ENCODE measurements at regions of chr12 and their contacts with region 1.

Region 1: DNA sequence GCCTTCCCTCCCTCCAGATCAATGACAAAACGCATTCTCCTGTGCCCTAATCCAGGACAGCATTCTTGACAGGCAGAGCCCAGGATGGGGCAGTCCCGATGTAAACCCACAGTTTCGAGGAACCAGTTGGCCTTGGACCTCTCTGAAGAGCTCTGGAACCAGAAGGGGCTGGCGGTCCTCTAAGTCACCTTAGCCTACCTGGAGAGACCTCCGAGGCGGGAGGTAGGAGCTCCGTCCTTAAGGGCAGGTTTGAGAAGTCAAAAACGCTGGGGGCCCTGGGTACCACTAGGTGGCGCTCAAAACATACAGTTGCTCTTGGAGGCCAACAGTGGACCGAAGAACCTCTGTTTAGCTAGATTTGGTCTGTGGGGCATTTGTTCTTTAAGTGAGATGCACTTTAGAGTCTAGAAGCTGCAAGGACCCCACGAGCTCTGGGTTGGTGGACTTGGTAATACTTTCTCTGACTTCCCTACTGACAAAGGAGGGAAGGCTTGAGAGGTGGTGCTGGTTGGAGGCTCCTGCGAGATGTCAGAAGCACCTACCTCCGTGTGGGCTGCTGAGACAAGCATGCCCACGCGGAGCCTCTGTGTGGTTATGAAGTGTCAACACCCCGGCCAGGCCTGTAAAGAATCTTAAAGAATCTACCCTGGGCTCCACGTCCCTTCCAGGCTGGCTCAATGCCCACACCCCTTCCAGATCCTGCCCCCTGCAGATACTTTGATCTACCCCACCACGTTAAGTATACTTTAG is 74.8 kb upstream of the CHST11 start:
- DNase-seq: peak; percentile 62 to 86 (median 74)
- ATAC-seq: peak; percentile 94
- H3K4me3 ChIP-seq: no peak overlapping the region
- H3K4me3 Mint-ChIP-seq: no peak overlapping the region
- H3K27ac ChIP-seq: no peak overlapping the region
- H3K27ac Mint-ChIP-seq: peak overlapping the region in 1 of 9 donors; percentile 17
- H3K4me1 ChIP-seq: peaks cover 0 to 6% of the 10 kb centered on the region in 2 donors
- H3K4me1 Mint-ChIP-seq: peaks cover 0 to 18% (median 6%) of the 10 kb centered on the region in 7 donors
- H3K27me3 ChIP-seq: no peaks in the 10 kb centered on the region
- H3K27me3 Mint-ChIP-seq: peaks cover 0 to 15% (median 10%) of the 10 kb centered on the region in 5 donors

Region 2: GRCh38 chr12:104352106-104352713 is 29.7 kb before region 1 on chr12:
- CTCF ChIA-PET with region 1: no interaction called
- POLR2A ChIA-PET with region 1: no interaction called
- intact Hi-C with region 1: no loop called
- DNase-seq: no peak
- ATAC-seq: no peak
- H3K4me3 ChIP-seq: no peak overlapping the region
- H3K4me3 Mint-ChIP-seq: no peak overlapping the region
- H3K27ac ChIP-seq: no peak overlapping the region
- H3K27ac Mint-ChIP-seq: no peak overlapping the region
- H3K4me1 ChIP-seq: no peaks in the 10 kb centered on the region
- H3K4me1 Mint-ChIP-seq: peaks cover 0 to 8% (median 0%) of the 10 kb centered on the region in 7 donors
- H3K27me3 ChIP-seq: no peaks in the 10 kb centered on the region
- H3K27me3 Mint-ChIP-seq: no peaks in the 10 kb centered on the region

Region 3: GRCh38 chr12:104519190-104519989 is 137.5 kb after region 1 on chr12:
- CTCF ChIA-PET with region 1: interaction called, 13 read pairs
- POLR2A ChIA-PET with region 1: no interaction called
- intact Hi-C with region 1: loop called in 1 of 2 experiments (anchors 2 kb)
- DNase-seq: no peak
- ATAC-seq: peak; percentile 86
- H3K4me3 ChIP-seq: no peak overlapping the region
- H3K4me3 Mint-ChIP-seq: peak overlapping the region in 2 of 10 donors; percentile 42 to 50
- H3K27ac ChIP-seq: no peak overlapping the region
- H3K27ac Mint-ChIP-seq: peak overlapping the region in 5 of 9 donors; percentile 22 to 62 (median 37)
- H3K4me1 ChIP-seq: peaks cover 25 to 41% of the 10 kb centered on the region in 2 donors
- H3K4me1 Mint-ChIP-seq: peaks cover 63 to 96% (median 86%) of the 10 kb centered on the region in 7 donors
- H3K27me3 ChIP-seq: no peaks in the 10 kb centered on the region
- H3K27me3 Mint-ChIP-seq: no peaks in the 10 kb centered on the region

Region 4: GRCh38 chr12:104680066-104680465 is 298.2 kb after region 1 on chr12:
- CTCF ChIA-PET with region 1: interaction called, 3 read pairs
- POLR2A ChIA-PET with region 1: no interaction called
- intact Hi-C with region 1: loop called (anchors 5 kb)
- DNase-seq: peak in 7 of 9 donors; percentile 15 to 51 (median 30)
- ATAC-seq: peak; percentile 44
- H3K4me3 ChIP-seq: no peak overlapping the region
- H3K4me3 Mint-ChIP-seq: peak overlapping the region in 3 of 10 donors; percentile 16 to 36 (median 26)
- H3K27ac ChIP-seq: no peak overlapping the region
- H3K27ac Mint-ChIP-seq: peak overlapping the region in 3 of 9 donors; percentile 15 to 80 (median 26)
- H3K4me1 ChIP-seq: peaks cover 25 to 46% of the 10 kb centered on the region in 2 donors
- H3K4me1 Mint-ChIP-seq: peaks cover 36 to 80% (median 46%) of the 10 kb centered on the region in 7 donors
- H3K27me3 ChIP-seq: no peaks in the 10 kb centered on the region
- H3K27me3 Mint-ChIP-seq: no peaks in the 10 kb centered on the region

Region 5: DNA sequence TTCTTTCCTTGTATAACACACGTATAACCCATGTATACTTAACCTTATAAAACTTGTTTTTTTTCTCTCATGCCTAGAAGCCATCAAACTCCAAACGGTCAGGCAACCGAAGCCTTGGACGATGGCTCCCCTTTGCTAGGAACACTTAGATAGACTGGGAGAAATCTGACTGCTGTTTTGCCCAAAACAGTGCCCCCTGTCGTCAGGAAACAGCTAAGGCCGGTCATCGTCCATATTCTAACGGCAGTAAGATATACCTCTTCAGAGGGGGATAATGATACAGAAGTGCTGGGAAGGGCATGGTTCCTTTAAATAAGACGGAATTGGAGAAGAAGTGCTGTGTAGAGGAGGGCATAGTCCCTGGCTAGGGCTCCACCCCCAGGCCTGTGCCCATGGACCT is 445.7 kb after region 1 on chr12:
- CTCF ChIA-PET with region 1: interaction called, 6 read pairs
- POLR2A ChIA-PET with region 1: no interaction called
- intact Hi-C with region 1: loop called in 1 of 2 experiments (anchors 1 kb)
- DNase-seq: peak in 1 of 9 donors; percentile 4
- ATAC-seq: no peak
- H3K4me3 ChIP-seq: no peak overlapping the region
- H3K4me3 Mint-ChIP-seq: no peak overlapping the region
- H3K27ac ChIP-seq: no peak overlapping the region
- H3K27ac Mint-ChIP-seq: no peak overlapping the region
- H3K4me1 ChIP-seq: no peaks in the 10 kb centered on the region
- H3K4me1 Mint-ChIP-seq: peaks cover 0 to 4% (median 1%) of the 10 kb centered on the region in 7 donors
- H3K27me3 ChIP-seq: no peaks in the 10 kb centered on the region
- H3K27me3 Mint-ChIP-seq: peaks cover 0 to 3% (median 0%) of the 10 kb centered on the region in 5 donors

Region 6: DNA sequence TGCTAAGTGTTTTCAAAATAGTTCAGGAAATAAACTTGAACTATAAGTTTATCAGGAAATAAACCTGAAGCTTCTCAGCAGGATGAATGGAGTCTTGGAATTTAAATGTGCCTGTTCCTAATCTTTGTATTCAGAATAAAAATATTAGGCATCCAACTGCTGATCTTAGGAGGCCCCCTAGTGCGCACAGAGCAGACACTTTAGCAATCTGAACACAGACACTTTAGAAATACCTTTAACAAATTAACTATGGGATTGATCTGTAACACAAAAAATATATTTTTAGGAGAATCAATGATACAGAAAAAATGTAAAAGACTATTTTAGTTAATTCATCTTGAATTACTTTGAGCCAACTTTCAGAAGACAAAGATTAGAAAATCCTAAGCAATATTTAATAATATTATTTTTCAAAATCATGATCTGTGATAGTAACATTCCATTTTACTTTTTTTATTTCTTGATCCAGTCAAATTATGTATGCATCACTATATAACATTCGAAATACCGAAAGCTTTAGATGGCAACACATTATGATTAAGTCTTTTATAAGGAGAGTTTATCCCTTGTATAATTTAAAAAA is 495.3 kb after region 1 on chr12:
- CTCF ChIA-PET with region 1: interaction called, 25 read pairs
- POLR2A ChIA-PET with region 1: no interaction called
- intact Hi-C with region 1: loop called (anchors 1 kb)
- DNase-seq: peak in 7 of 9 donors; percentile 5 to 52 (median 29)
- ATAC-seq: peak; percentile 56
- H3K4me3 ChIP-seq: no peak overlapping the region
- H3K4me3 Mint-ChIP-seq: no peak overlapping the region
- H3K27ac ChIP-seq: no peak overlapping the region
- H3K27ac Mint-ChIP-seq: no peak overlapping the region
- H3K4me1 ChIP-seq: no peaks in the 10 kb centered on the region
- H3K4me1 Mint-ChIP-seq: peaks cover 0 to 9% (median 0%) of the 10 kb centered on the region in 7 donors
- H3K27me3 ChIP-seq: no peaks in the 10 kb centered on the region
- H3K27me3 Mint-ChIP-seq: peaks cover 0 to 12% (median 0%) of the 10 kb centered on the region in 5 donors

Region 7: GRCh38 chr12:105420659-105421240 is 1038.8 kb after region 1 on chr12:
- CTCF ChIA-PET with region 1: no interaction called
- POLR2A ChIA-PET with region 1: no interaction called
- intact Hi-C with region 1: no loop called
- DNase-seq: peak in 8 of 9 donors; percentile 8 to 56 (median 44)
- ATAC-seq: peak; percentile 78
- H3K4me3 ChIP-seq: no peak overlapping the region
- H3K4me3 Mint-ChIP-seq: no peak overlapping the region
- H3K27ac ChIP-seq: no peak overlapping the region
- H3K27ac Mint-ChIP-seq: no peak overlapping the region
- H3K4me1 ChIP-seq: no peaks in the 10 kb centered on the region
- H3K4me1 Mint-ChIP-seq: no peaks in the 10 kb centered on the region
- H3K27me3 ChIP-seq: no peaks in the 10 kb centered on the region
- H3K27me3 Mint-ChIP-seq: peaks cover 0 to 6% (median under 1%) of the 10 kb centered on the region in 5 donors

Measured in naive thymus-derived CD4-positive, alpha-beta T cell (primary cell).